ENCODE measurements at regions of chr2 and their contacts with region 1.

Region 1: DNA sequence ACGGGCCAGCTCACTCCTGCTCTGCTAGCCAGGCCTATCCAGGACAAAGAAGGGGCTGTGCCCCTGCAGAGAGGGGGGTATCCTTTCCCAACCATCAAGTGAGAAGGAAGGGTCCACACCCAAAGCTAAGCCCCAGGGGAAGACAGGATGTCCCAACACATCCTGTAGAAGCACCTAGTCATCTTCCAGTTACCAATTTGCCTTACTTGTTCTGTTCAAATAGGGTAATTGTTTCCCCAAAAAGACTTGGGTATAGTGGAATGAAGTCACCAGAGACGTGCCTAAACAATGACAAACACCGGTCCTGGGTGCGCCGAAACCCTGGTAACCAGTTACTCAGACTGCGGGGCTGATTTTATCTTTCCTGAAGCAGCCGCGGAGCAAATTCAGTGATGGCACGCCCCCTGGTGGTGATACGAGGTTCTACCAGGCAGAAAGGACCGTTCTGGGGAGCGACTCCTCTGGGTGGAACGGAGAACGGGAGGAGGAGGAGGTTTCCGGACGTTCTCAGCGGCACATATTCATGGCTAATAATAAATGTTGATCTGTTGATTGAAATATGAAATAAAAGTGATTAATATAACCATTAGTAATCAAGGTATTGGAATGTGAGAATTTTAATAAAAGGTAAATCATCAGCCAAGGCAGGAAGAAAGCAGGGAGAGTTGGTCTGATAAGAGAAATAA is 109.3 kb upstream of the STON1 start:
- DNase-seq: peak; percentile 87 to 91 (median 88)
- ATAC-seq: peak; percentile 79 to 88 (median 84)
- H3K4me3 ChIP-seq: peak overlapping the region in 1 of 3 donors; percentile 0
- H3K27ac ChIP-seq: peak overlapping the region in 2 of 3 donors; percentile 24 to 63
- H3K4me1 ChIP-seq: peaks cover 0 to 44% (median 22%) of the 10 kb centered on the region in 4 donors
- H3K27me3 ChIP-seq: no peaks in the 10 kb centered on the region
- CTCF ChIP-seq: peak in 3 of 4 donors; percentile 96 to 99 (median 98)
- POLR2A ChIP-seq: no peak

Region 2: DNA sequence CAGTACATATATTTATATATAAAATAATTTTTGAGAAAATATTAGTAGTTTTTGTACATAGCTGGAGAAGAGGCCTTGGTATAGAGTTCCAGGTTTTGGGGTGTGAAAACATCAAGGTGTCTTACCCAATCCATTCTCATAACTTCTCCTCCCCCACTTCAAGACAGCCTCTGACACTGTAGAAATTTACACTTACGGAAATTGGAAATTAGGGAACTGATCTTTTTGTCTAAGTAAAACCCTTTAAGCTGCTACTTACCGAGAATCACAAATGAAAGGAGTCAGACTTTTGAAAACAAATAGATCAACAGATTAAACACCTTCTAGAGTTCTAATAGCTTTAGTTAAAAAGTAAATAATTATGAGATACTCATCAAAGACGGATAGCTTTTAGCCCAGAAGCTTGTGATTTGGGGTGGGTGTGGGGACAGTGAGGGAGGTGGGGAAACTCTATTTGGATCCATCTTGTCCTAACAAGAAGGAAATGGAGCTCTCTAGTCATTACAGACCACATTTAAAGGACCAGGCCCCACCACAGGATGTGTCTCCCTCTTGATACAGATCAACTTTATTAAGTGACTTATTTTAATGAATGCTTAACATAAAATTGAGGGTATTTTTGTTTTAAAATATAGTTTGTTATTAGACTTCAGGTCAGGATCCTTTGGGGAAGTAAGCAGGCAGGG is 503.2 kb before region 1 on chr2:
- intact Hi-C with region 1: loop called in 1 of 2 experiments (anchors 10 kb)
- DNase-seq: no peak
- ATAC-seq: no peak
- H3K4me3 ChIP-seq: no peak overlapping the region
- H3K27ac ChIP-seq: no peak overlapping the region
- H3K4me1 ChIP-seq: no peaks in the 10 kb centered on the region
- H3K27me3 ChIP-seq: no peaks in the 10 kb centered on the region
- CTCF ChIP-seq: no peak
- POLR2A ChIP-seq: no peak

Measured in right lobe of liver (tissue), 6 donors.